Calu3 (cell line): ENCODE measurements at regions of chr2 and their contacts with region 1.

Region 1: DNA sequence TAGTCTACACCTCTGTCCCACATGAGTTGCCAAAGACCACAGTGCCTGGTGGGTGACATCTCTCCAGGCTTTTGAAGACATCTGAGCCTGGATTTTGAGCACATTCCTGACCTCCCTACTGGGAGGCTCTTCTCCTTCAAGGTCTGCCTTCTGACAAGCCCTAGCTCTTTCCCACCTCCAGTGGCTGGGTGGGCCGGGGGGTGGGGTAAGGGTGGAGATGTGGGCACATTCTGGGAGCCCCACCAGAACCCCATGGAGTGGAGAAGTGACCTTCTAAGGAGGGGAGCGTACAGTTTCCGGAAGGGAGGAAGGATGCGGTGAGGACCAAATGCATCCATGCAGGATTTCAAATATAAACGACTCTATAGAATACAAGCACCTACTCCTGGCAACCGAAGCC is 27.9 kb upstream of the ANXA4 start:
- DNase-seq: no peak
- H3K4me3 Mint-ChIP-seq: no peak overlapping the region
- H3K27ac Mint-ChIP-seq: no peak overlapping the region
- H3K4me1 Mint-ChIP-seq: no peaks in the 10 kb centered on the region
- H3K27me3 Mint-ChIP-seq: peaks cover 13% of the 10 kb centered on the region
- CTCF ChIP-seq: no peak

Region 2: GRCh38 chr2:69559442-69560146 is 154.4 kb before region 1 on chr2:
- CTCF ChIA-PET with region 1: interaction called, 3 read pairs
- intact Hi-C with region 1: loop called (anchors 1 kb)
- DNase-seq: peak; percentile 37
- H3K4me3 Mint-ChIP-seq: no peak overlapping the region
- H3K27ac Mint-ChIP-seq: no peak overlapping the region
- H3K4me1 Mint-ChIP-seq: peaks cover 12% of the 10 kb centered on the region
- H3K27me3 Mint-ChIP-seq: no peaks in the 10 kb centered on the region
- CTCF ChIP-seq: peak; percentile 64